ENCODE measurements at regions of chr13 and their contacts with region 1.

Region 1: DNA sequence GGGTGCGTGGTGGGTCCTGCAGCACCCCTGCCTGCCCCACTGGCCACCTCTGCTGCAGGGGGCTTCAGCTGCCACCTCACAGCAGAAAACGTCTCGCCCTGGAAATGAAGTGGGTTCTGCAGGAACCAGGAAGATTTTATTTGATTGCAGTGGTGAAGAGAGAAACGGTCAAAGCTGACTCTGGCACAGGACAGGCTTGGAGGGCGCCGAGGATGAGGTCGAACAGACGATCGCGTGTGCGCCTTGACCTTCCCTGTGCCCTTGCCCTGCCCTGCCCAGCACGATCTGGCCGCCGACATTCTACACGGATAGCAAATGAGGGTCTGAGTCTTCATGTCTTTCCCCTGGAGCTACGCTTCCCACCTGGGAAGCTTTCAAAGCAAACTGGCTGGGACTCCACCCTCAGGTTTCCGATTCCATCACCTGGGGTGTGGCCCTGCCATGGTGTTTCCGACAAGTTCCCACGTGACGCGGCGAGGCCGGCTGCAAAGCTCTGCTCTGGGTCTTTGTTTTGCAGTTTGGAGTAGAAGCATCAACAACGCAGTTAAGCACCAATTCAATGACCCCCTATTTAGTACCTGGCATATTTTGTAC is 50.3 kb upstream of the TUBGCP3 start:
- DNase-seq: no peak
- H3K4me3 ChIP-seq: no peak overlapping the region
- H3K27ac ChIP-seq: no peak overlapping the region
- H3K4me1 ChIP-seq: peaks cover 4% of the 10 kb centered on the region
- H3K27me3 ChIP-seq: peaks cover 22 to 32% of the 10 kb centered on the region in 2 experiments
- CTCF ChIP-seq: no peak
- POLR2A ChIP-seq: no peak

Region 2: DNA sequence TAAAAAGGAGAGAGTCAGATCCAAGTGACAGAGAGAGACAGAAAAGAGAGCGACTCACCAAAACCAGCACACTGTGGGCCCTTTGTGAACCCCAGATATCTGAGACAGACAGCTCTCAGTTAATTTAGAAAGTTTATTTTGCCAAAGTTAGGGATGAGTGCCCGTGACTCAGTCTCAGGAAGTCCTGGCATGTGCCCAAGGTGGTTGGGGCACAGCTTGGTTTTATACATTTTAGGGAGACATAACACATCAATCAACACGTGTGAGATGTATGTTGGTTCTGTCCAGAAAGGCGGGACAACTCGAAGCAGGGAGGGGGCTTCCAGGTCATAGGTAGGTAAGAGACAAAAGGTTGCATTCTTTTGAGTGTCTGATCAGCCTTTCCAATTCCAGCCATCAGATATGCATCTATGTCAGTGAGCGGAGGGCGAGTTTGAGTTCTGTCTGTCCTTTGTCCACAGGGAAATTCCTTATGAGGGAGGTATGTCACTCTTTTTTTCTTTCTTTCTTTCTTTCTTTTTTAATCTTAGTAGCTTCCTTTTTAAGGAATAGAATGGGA is 14.3 kb after region 1 on chr13:
- CTCF ChIA-PET with region 1: interaction called, 15 read pairs
- POLR2A ChIA-PET with region 1: no interaction called
- dilution Hi-C with region 1: no loop called
- intact Hi-C with region 1: no loop called
- DNase-seq: no peak
- H3K4me3 ChIP-seq: no peak overlapping the region
- H3K27ac ChIP-seq: no peak overlapping the region
- H3K4me1 ChIP-seq: peaks cover 2% of the 10 kb centered on the region
- H3K27me3 ChIP-seq: peaks cover 5 to 6% of the 10 kb centered on the region in 2 experiments
- CTCF ChIP-seq: no peak
- POLR2A ChIP-seq: no peak

Region 3: GRCh38 chr13:112689303-112690165 is 51.3 kb after region 1 on chr13 and contains the start of gene ATP11A:
- CTCF ChIA-PET with region 1: no interaction called
- POLR2A ChIA-PET with region 1: no interaction called
- dilution Hi-C with region 1: no loop called
- intact Hi-C with region 1: loop called (anchors 2 kb)
- DNase-seq: peak; percentile 90
- H3K4me3 ChIP-seq: peak within 1 kb of the TSS; percentile 92 to 97 (median 96)
- H3K27ac ChIP-seq: peak within 1 kb of the TSS; percentile 49
- H3K4me1 ChIP-seq: peaks cover 14% of the 10 kb centered on the region
- H3K27me3 ChIP-seq: no peaks in the 10 kb centered on the region
- CTCF ChIP-seq: no peak
- POLR2A ChIP-seq: no peak
- total RNA-seq, gene ATP11A: 71.7 and 88.1 TPM in 2 replicates

Region 4: DNA sequence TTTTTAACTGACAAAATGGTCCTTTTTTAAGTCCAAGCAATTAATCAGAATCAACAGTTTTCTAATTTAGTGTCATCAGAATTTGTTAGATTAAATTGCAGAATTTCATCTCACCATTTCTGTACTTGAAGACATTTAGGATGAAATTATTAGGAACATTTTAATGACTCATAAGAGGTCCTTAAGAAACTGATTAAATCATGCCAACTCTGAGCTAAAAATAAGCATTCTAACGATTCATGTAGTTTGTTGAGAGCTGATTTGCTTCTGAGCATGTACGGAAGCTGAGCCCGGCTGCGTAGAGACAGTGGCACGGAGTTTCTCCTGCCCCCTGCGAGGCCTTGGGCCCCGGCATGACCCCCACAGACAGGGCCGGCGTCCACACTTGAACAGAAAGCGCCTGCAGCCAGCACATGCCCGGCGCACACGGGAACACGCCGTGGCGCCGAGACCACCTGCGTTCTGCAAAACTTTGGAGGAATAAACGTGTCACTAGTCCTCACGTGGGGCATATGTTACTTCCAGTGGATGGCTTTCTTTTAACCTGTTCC is 241.1 kb after region 1 on chr13:
- CTCF ChIA-PET with region 1: interaction called, 38 read pairs
- POLR2A ChIA-PET with region 1: no interaction called
- dilution Hi-C with region 1: no loop called
- intact Hi-C with region 1: loop called (anchors 1 kb)
- DNase-seq: no peak
- H3K4me3 ChIP-seq: no peak overlapping the region
- H3K27ac ChIP-seq: no peak overlapping the region
- H3K4me1 ChIP-seq: no peaks in the 10 kb centered on the region
- H3K27me3 ChIP-seq: no peaks in the 10 kb centered on the region
- CTCF ChIP-seq: no peak
- POLR2A ChIP-seq: no peak